Common myeloid progenitor, CD34-positive (primary cell): ENCODE measurements at regions of chr11 and their contacts with region 1.

Region 1: GRCh38 chr11:10540923-10541560 is at the start of gene RNF141:
- DNase-seq: peak; percentile 92 to 94 (median 93)
- H3K4me3 ChIP-seq: peak within 1 kb of the TSS; percentile 75 to 94 (median 87)
- H3K27ac ChIP-seq: peak within 1 kb of the TSS; percentile 66 to 87
- H3K4me1 ChIP-seq: peaks cover 16 to 35% (median 26%) of the 10 kb centered on the region in 4 experiments
- H3K27me3 ChIP-seq: no peaks in the 10 kb centered on the region

Region 2: GRCh38 chr11:10526974-10527918 is 13.8 kb before region 1 on chr11:
- CTCF ChIA-PET with region 1: interaction called, 13 read pairs
- POLR2A ChIA-PET with region 1: no interaction called
- DNase-seq: no peak
- H3K4me3 ChIP-seq: no peak overlapping the region
- H3K27ac ChIP-seq: no peak overlapping the region
- H3K4me1 ChIP-seq: peaks cover 0 to 15% (median under 1%) of the 10 kb centered on the region in 4 experiments
- H3K27me3 ChIP-seq: no peaks in the 10 kb centered on the region

Region 3: DNA sequence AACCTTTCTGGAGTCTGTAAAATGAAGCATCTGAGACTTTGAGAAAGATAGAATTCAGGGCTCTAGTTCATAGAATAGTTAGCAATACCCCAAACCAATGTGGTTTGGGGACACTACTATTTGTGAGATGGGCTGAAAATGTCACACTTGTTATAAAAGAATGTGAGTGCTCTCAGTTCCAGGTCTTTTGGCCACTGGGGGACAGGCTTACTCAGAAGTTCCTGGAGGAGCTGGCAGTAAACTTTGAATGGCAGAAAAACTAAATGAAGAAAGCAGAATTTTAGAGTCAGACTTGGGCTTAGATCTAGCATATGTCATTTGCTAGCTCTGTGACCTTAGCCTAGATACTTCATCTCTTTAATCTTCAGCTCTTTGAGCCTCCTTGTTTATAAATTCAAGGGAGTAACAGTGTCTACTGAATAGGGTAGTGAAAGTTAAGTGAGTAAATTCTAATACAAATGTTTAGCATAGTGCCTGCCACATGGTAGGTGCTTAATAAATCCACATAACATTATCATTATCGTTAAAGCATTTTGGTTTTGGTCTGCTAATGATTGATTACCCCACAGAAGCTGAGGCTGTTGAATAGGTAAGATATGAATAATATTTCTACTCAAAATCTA is 23.8 kb after region 1 on chr11:
- CTCF ChIA-PET with region 1: interaction called, 15 read pairs
- POLR2A ChIA-PET with region 1: interaction called, 3 read pairs
- DNase-seq: peak in 2 of 3 donors; percentile 59
- H3K4me3 ChIP-seq: no peak overlapping the region
- H3K27ac ChIP-seq: no peak overlapping the region
- H3K4me1 ChIP-seq: peaks cover 0 to 6% (median 3%) of the 10 kb centered on the region in 4 experiments
- H3K27me3 ChIP-seq: no peaks in the 10 kb centered on the region

Region 4: GRCh38 chr11:10581481-10582019 is 40.5 kb after region 1 on chr11:
- CTCF ChIA-PET with region 1: interaction called, 10 read pairs
- POLR2A ChIA-PET with region 1: no interaction called
- DNase-seq: peak; percentile 71 to 95 (median 87)
- H3K4me3 ChIP-seq: peak overlapping the region in 1 of 7 experiments; percentile 19
- H3K27ac ChIP-seq: no peak overlapping the region
- H3K4me1 ChIP-seq: peaks cover 30 to 61% (median 49%) of the 10 kb centered on the region in 4 experiments
- H3K27me3 ChIP-seq: no peaks in the 10 kb centered on the region

Region 5: DNA sequence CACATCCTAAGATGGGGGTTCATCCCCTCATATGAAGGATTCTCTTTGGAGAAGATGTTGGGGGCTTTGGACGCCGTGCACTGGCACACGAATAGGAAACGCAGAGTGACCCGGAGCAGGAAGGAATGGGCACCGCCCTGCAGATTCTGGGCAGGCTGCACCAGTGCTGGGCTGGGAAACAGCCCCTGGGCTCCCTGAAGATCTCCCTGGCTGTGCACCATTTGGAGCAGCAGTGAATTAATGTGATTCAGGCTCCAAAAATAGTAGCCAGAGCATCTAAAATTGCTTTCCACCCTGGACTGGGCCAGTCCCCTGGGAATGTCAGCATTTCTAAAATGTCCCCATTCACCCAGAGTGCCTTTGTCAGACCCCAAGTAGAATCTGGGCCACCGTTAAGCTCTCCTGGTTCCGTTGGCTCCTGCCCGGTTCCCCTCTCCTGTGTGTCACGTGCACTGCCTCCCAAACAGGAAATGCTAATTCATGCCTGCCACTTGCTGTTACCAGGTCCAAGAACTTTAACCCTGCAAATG is 133.9 kb after region 1 on chr11:
- CTCF ChIA-PET with region 1: no interaction called
- POLR2A ChIA-PET with region 1: no interaction called
- DNase-seq: peak in 2 of 3 donors; percentile 35 to 38
- H3K4me3 ChIP-seq: peak overlapping the region in 3 of 7 experiments; percentile 27 to 54 (median 41)
- H3K27ac ChIP-seq: no peak overlapping the region
- H3K4me1 ChIP-seq: peaks cover 13 to 39% (median 36%) of the 10 kb centered on the region in 4 experiments
- H3K27me3 ChIP-seq: no peaks in the 10 kb centered on the region